Activated CD4-positive, alpha-beta memory T cell treated with anti-CD3 and anti-CD28 coated beads for 36 hours (primary cell): ENCODE measurements at regions of chr19 and their contacts with region 1.

Region 1: GRCh38 chr19:12092065-12092867 is 27.7 kb downstream of the ZNF844 start:
- DNase-seq: peak; percentile 84
- H3K4me3 Mint-ChIP-seq: peak overlapping the region; percentile 80
- H3K27ac Mint-ChIP-seq: no peak overlapping the region
- H3K4me1 Mint-ChIP-seq: peaks cover 11% of the 10 kb centered on the region
- H3K27me3 Mint-ChIP-seq: peaks cover 14% of the 10 kb centered on the region

Region 2: GRCh38 chr19:11964858-11965645 is 127.2 kb before region 1 on chr19 and contains the start of gene ZNF763:
- CTCF ChIA-PET with region 1: interaction called, 16 read pairs
- POLR2A ChIA-PET with region 1: no interaction called
- intact Hi-C with region 1: no loop called
- DNase-seq: peak; percentile 94
- H3K4me3 Mint-ChIP-seq: peak within 1 kb of the TSS; percentile 88
- H3K27ac Mint-ChIP-seq: peak within 1 kb of the TSS; percentile 79
- H3K4me1 Mint-ChIP-seq: peaks cover 20% of the 10 kb centered on the region
- H3K27me3 Mint-ChIP-seq: no peaks in the 10 kb centered on the region
- total RNA-seq, gene ZNF763: 0.97 to 1.6 TPM

Region 3: DNA sequence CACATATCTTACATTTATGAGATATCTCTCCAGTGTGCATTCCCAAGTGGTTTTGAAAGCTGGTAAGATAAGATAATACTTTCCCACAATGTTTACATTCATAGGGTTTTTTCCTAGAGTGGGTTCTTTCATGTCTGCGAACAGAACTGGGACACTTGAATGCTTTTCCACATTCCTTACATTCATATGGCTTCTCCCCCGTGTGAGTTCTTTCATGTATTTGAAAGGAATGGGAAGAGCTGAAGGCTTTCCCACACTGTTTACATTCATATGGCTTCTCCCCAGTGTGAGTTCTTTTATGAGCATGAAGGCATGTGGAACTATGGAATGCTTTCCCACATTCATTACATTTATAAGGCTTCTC is 76.5 kb before region 1 on chr19:
- CTCF ChIA-PET with region 1: no interaction called
- POLR2A ChIA-PET with region 1: no interaction called
- intact Hi-C with region 1: no loop called
- DNase-seq: no peak
- H3K4me3 Mint-ChIP-seq: no peak overlapping the region
- H3K27ac Mint-ChIP-seq: no peak overlapping the region
- H3K4me1 Mint-ChIP-seq: no peaks in the 10 kb centered on the region
- H3K27me3 Mint-ChIP-seq: no peaks in the 10 kb centered on the region

Region 4: DNA sequence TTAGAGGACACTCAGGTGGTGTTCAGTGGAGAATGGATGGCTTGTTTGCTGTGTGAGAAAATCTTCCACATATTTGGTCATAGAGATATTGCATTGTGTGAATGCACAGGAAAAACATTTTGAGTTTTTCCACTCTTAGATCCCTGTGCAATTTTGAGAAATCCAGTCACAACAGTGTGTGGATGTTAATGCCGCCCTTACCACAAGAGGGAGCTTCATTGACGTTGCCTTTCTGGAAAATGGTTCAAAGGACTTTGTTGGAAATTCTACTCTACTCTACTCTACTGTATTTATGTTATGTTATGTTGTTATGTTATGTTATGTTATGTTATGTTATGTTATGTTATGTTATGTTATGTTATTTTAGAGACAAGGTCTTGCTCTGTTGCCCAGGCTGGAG is 34.4 kb after region 1 on chr19:
- CTCF ChIA-PET with region 1: interaction called, 16 read pairs
- POLR2A ChIA-PET with region 1: no interaction called
- intact Hi-C with region 1: no loop called
- DNase-seq: no peak
- H3K4me3 Mint-ChIP-seq: no peak overlapping the region
- H3K27ac Mint-ChIP-seq: no peak overlapping the region
- H3K4me1 Mint-ChIP-seq: no peaks in the 10 kb centered on the region
- H3K27me3 Mint-ChIP-seq: no peaks in the 10 kb centered on the region

Region 5: GRCh38 chr19:12145348-12145747 is 53.1 kb after region 1 on chr19:
- CTCF ChIA-PET with region 1: interaction called, 106 read pairs
- POLR2A ChIA-PET with region 1: interaction called, 6 read pairs
- intact Hi-C with region 1: loop called (anchors 1 kb)
- DNase-seq: no peak
- H3K4me3 Mint-ChIP-seq: no peak overlapping the region
- H3K27ac Mint-ChIP-seq: no peak overlapping the region
- H3K4me1 Mint-ChIP-seq: peaks cover 10% of the 10 kb centered on the region
- H3K27me3 Mint-ChIP-seq: no peaks in the 10 kb centered on the region

Region 6: DNA sequence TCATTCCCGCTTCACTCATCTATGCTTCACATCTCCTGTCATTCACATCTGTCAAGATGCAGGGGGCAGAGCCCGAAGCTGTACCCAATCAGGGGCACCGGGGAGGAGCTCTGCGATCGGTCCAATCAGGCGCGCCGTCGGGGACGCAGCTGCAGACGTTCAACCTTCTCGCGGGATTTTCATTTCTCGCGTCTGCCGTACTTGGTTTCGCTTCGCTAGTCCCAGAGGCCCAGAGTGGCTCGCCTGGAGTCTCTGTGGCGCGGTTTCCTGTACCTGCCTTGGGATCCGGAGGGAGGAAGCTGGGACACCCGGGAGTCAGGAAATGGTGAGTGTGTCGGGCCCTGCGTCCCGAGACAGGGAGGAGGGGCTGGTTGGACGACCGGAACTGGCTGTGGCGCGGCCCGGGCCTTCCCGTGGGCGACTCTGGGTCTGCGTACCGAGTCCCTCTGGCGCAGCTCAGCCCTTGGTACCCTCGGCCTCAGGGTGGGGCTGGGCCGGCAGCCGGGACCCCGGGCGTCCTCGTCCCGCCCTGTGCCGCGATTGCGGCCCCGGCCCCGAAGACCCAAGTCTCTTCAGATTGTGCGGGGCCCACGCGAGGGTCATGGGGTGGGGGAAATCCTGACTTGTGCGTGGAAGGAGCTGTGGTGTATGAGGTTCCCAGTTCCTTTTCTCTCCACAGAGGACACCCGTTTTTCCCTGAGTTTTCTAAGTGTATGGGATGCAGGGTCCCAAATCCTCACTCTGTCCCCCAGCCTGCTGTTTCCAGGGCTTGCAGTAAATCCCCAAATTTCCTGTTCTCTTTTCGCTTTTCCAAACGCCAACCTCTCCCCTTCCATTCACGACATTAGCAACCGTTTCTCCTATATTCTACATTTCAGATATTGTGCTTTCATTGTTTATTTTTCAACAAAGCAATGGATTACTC is 70.9 kb after region 1 on chr19 and contains the start of gene ZNF136:
- CTCF ChIA-PET with region 1: interaction called, 14 read pairs
- POLR2A ChIA-PET with region 1: no interaction called
- intact Hi-C with region 1: no loop called
- DNase-seq: peak; percentile 97
- H3K4me3 Mint-ChIP-seq: peak within 1 kb of the TSS; percentile 92
- H3K27ac Mint-ChIP-seq: peak within 1 kb of the TSS; percentile 94
- H3K4me1 Mint-ChIP-seq: peaks cover 40% of the 10 kb centered on the region
- H3K27me3 Mint-ChIP-seq: no peaks in the 10 kb centered on the region
- total RNA-seq, gene ZNF136: 9.5 to 12.8 TPM